Adrenal gland (tissue), 19 donors: ENCODE measurements at regions of chr2 and their contacts with region 1.

Region 1: GRCh38 chr2:84495539-84496146 is 20.7 kb upstream of the DNAH6 start:
- DNase-seq: peak in 3 of 7 donors; percentile 11 to 33 (median 25)
- H3K4me3 ChIP-seq: no peak overlapping the region
- H3K27ac ChIP-seq: no peak overlapping the region
- H3K4me1 ChIP-seq: no peaks in the 10 kb centered on the region
- H3K27me3 ChIP-seq: no peaks in the 10 kb centered on the region
- CTCF ChIP-seq: peak; percentile 43 to 80 (median 70)
- POLR2A ChIP-seq: no peak

Region 2: DNA sequence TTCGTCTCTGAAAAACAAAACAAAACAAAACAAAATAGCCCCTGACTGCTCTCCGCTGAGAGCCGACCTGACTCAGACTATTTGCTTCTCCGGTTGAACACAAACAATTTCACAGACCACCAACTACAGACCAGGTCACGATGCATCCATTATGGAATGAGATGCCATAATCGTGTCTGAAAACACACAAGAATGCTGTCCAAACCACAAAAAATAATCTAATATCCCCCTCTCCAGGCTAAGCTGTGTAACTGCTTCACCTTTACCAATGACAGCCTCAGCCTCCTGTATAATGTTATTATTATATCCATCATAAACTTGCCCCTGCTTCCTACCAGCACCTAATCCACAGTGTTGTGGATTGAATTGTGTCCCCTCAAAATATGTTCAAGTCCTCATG is 135.4 kb after region 1 on chr2:
- intact Hi-C with region 1: loop called in 1 of 2 experiments (anchors 10 kb)
- DNase-seq: no peak
- H3K4me3 ChIP-seq: no peak overlapping the region
- H3K27ac ChIP-seq: no peak overlapping the region
- H3K4me1 ChIP-seq: no peaks in the 10 kb centered on the region
- H3K27me3 ChIP-seq: no peaks in the 10 kb centered on the region
- CTCF ChIP-seq: peak in 5 of 6 experiments; percentile 15 to 57 (median 56)
- POLR2A ChIP-seq: no peak

Region 3: DNA sequence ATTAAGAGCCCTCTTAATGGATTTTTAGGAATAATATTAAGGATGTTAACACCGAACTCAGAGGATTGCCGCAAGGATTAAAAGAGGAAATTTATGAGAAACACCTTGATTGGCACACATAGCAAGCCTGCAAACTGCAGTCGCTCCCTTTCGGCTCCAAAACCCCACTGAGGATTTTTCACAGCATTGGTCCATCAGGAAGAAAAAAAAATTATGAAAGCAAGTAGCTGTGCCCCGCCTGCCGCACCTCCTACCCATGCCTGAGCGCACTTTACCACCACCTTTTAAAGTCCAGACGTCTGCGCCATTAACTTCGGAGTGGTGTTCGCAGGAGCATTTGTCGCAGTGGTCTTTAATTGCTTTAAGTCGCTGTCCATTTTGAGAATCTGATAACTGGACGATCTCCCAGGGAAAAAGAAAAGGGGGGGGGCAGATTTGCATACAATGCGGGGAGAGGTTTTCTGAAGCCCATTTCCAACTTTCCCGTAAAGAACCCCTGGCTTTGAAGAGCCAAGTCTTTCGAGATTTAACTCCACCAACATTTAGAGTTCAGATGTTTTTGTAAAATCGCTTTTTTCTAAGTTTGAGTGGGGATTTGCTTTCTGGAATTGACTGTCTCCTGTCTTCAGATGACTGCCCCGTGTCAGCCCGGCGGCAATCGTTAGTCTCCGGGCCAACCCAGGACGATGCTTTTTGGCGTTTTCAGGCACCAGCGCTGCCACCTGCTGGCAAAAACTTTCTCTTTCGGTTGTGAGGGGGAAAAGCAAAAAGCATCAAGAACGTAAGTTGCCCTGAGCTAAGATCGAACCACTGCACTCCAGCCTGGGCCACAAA is 386.2 kb after region 1 on chr2:
- intact Hi-C with region 1: loop called in 1 of 2 experiments (anchors 5 kb)
- DNase-seq: peak; percentile 70 to 88 (median 82)
- H3K4me3 ChIP-seq: peak overlapping the region in 2 of 4 donors; percentile 34 to 52
- H3K27ac ChIP-seq: no peak overlapping the region
- H3K4me1 ChIP-seq: peaks cover 16 to 21% of the 10 kb centered on the region in 2 donors
- H3K27me3 ChIP-seq: peaks cover 30% of the 10 kb centered on the region
- CTCF ChIP-seq: peak; percentile 49 to 71 (median 68)
- POLR2A ChIP-seq: no peak

Region 4: GRCh38 chr2:85288244-85288725 is 792.6 kb after region 1 on chr2:
- intact Hi-C with region 1: loop called in 1 of 2 experiments (anchors 10 kb)
- DNase-seq: no peak
- H3K4me3 ChIP-seq: no peak overlapping the region
- H3K27ac ChIP-seq: no peak overlapping the region
- H3K4me1 ChIP-seq: no peaks in the 10 kb centered on the region
- H3K27me3 ChIP-seq: no peaks in the 10 kb centered on the region
- CTCF ChIP-seq: no peak
- POLR2A ChIP-seq: no peak